H1 (cell line): ENCODE measurements at regions of chr5 and their contacts with region 1.

Region 1: DNA sequence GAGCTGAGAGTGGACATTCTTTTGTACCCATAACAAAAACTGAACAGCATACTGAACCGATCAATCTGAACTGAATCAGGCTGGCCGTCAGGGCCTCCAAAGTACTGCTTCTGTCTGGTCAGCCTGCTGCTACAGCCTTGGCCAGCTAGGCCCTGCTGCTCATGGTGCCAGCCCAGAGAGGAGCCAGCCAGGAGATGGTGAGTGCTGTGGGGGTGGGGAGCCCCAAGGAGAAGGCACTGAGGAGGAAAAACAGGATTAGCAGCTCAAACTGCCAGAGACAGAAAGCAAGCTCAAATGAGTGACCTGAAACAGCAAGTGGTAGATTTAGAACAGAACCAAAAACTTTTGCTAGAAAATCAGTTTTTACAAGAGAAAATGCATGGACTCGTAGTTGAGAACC is 23.9 kb downstream of the SRP19 start:
- DNase-seq: no peak
- H3K4me3 ChIP-seq: no peak overlapping the region
- H3K27ac ChIP-seq: no peak overlapping the region
- H3K4me1 ChIP-seq: no peaks in the 10 kb centered on the region
- H3K27me3 ChIP-seq: no peaks in the 10 kb centered on the region
- CTCF ChIP-seq: no peak
- EP300 ChIP-seq: no peak
- POLR2A ChIP-seq: no peak
- RAD21 ChIP-seq: no peak

Region 2: DNA sequence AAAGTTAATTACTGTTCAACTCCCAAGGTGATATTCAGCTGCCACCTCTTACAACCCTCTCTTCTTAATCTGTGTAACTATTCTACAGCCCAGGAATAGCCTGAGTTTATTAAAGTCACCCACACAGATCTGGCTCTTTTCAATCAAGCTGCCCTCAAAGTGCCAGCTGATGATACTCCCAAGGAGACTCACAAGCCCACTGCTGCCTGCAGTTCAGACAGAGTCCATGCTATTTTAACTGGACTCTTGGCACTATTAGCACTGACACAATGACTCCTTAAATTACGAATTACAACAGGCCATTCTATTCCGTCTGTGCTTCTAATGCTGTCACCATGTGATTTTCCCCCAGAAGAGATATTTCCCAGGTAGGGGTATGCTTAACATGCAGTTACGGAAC is 10.7 kb after region 1 on chr5:
- CTCF ChIA-PET with region 1: interaction called, 22 read pairs
- POLR2A ChIA-PET with region 1: interaction called, 4 read pairs
- DNase-seq: no peak
- H3K4me3 ChIP-seq: no peak overlapping the region
- H3K27ac ChIP-seq: no peak overlapping the region
- H3K4me1 ChIP-seq: no peaks in the 10 kb centered on the region
- H3K27me3 ChIP-seq: no peaks in the 10 kb centered on the region
- CTCF ChIP-seq: no peak
- EP300 ChIP-seq: no peak
- POLR2A ChIP-seq: no peak
- RAD21 ChIP-seq: no peak

Region 3: GRCh38 chr5:113283558-113283957 is 398.6 kb after region 1 on chr5:
- CTCF ChIA-PET with region 1: no interaction called
- POLR2A ChIA-PET with region 1: no interaction called
- DNase-seq: no peak
- H3K4me3 ChIP-seq: no peak overlapping the region
- H3K27ac ChIP-seq: no peak overlapping the region
- H3K4me1 ChIP-seq: peaks cover 0 to 10% (median 4%) of the 10 kb centered on the region in 4 experiments; a peak in 3 of 7 replicates
- H3K27me3 ChIP-seq: no peaks in the 10 kb centered on the region
- CTCF ChIP-seq: no peak
- EP300 ChIP-seq: no peak
- POLR2A ChIP-seq: no peak
- RAD21 ChIP-seq: no peak